ENCODE measurements at regions of chr11 and their contacts with region 1.

Region 1: DNA sequence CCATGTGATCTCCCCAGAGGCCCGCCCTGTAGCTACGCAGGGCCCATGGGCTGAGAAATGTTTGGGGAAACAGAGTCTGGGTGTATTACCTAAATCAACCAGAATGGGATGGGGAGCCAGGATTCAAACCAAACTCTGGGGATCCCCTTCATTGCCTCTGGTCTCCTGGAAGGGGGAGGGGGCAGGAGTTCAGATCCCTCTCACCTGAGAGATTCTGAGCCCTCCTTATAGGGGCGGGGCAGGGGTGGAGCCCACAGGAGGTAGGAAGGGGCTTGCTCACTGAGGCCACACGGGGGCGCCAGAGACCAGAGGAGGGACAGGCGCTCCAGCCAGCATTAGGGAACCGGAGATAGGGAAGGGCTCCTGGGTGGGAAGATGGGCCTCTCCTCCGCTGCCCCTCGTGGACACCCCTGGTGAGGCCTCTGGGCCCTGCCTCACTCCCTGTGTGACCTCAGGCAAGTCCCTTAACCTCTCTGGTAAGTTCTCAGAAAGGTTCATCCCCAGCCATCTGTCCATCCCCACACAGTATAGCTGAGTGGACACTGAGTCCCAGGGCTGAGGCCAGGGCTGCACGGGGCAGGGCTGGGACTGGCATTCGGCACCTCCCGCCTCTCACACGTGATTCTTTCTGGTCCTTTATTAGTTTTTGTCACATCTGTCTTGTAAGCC is 2.7 kb upstream of the CDC42BPG start:
- DNase-seq: peak; percentile 87 to 98
- H3K4me3 ChIP-seq: no peak overlapping the region
- H3K27ac ChIP-seq: no peak overlapping the region
- H3K4me1 ChIP-seq: peaks cover 0 to 38% (median 21%) of the 10 kb centered on the region in 4 experiments; a peak in 6 of 7 replicates
- H3K27me3 ChIP-seq: no peaks in the 10 kb centered on the region
- CTCF ChIP-seq: peak in 2 of 3 experiments; percentile 91 to 97; a peak in 3 of 4 replicates
- EP300 ChIP-seq: no peak
- POLR2A ChIP-seq: no peak
- RAD21 ChIP-seq: peak; percentile 91 to 97

Region 2: GRCh38 chr11:64742889-64743590 is 104.1 kb before region 1 on chr11:
- CTCF ChIA-PET with region 1: no interaction called
- POLR2A ChIA-PET with region 1: no interaction called
- DNase-seq: peak in 1 of 2 experiments; percentile 94
- H3K4me3 ChIP-seq: peak overlapping the region; percentile 46 to 67 (median 57)
- H3K27ac ChIP-seq: no peak overlapping the region
- H3K4me1 ChIP-seq: peaks cover 4 to 33% (median 29%) of the 10 kb centered on the region in 4 experiments
- H3K27me3 ChIP-seq: peaks cover 0 to 32% (median 19%) of the 10 kb centered on the region in 4 experiments; a peak in 5 of 7 replicates
- CTCF ChIP-seq: peak in 2 of 3 experiments; percentile 74; a peak in 3 of 4 replicates
- EP300 ChIP-seq: no peak
- POLR2A ChIP-seq: 0 out of 3 replicates have a peak, but pooled peaks of 1 of the 2 experiments have one; percentile 14
- RAD21 ChIP-seq: peak; percentile 56 to 74

Region 3: GRCh38 chr11:64803163-64803845 is 43.8 kb before region 1 on chr11 and contains the start of gene MAP4K2:
- CTCF ChIA-PET with region 1: interaction called, 24 read pairs
- POLR2A ChIA-PET with region 1: interaction called, 4 read pairs
- DNase-seq: peak in 1 of 2 experiments; percentile 89
- H3K4me3 ChIP-seq: peak within 1 kb of the TSS; percentile 53 to 77 (median 66)
- H3K27ac ChIP-seq: peak within 1 kb of the TSS; percentile 57; the same call in 1 of the 2 replicates
- H3K4me1 ChIP-seq: peaks cover 0 to 14% (median 5%) of the 10 kb centered on the region in 4 experiments; a peak in 5 of 7 replicates
- H3K27me3 ChIP-seq: no peaks in the 10 kb centered on the region
- CTCF ChIP-seq: peak in 2 of 3 experiments; percentile 8 to 20; a peak in 2 of 4 replicates
- EP300 ChIP-seq: no peak
- POLR2A ChIP-seq: no peak
- RAD21 ChIP-seq: no peak
- total RNA-seq, gene MAP4K2: 20.7 and 24.0 TPM in 2 replicates

Region 4: GRCh38 chr11:64864473-64865285 is 17.5 kb after region 1 on chr11:
- CTCF ChIA-PET with region 1: interaction called, 321 read pairs
- POLR2A ChIA-PET with region 1: interaction called, 6 read pairs
- DNase-seq: no peak
- H3K4me3 ChIP-seq: no peak overlapping the region
- H3K27ac ChIP-seq: no peak overlapping the region
- H3K4me1 ChIP-seq: peaks cover 0 to 20% (median 15%) of the 10 kb centered on the region in 4 experiments; a peak in 6 of 7 replicates
- H3K27me3 ChIP-seq: no peaks in the 10 kb centered on the region
- CTCF ChIP-seq: no peak
- EP300 ChIP-seq: no peak
- POLR2A ChIP-seq: no peak
- RAD21 ChIP-seq: no peak

Region 5: GRCh38 chr11:64916775-64917662 is 69.9 kb after region 1 on chr11 and contains the start of gene ATG2A:
- CTCF ChIA-PET with region 1: interaction called, 37 read pairs
- POLR2A ChIA-PET with region 1: no interaction called
- DNase-seq: peak; percentile 97 to 98
- H3K4me3 ChIP-seq: peak within 1 kb of the TSS; percentile 74 to 97 (median 93)
- H3K27ac ChIP-seq: peak within 1 kb of the TSS; percentile 45
- H3K4me1 ChIP-seq: peaks cover 0 to 11% (median 4%) of the 10 kb centered on the region in 4 experiments; a peak in 5 of 7 replicates
- H3K27me3 ChIP-seq: no peaks in the 10 kb centered on the region
- CTCF ChIP-seq: no peak
- EP300 ChIP-seq: no peak
- POLR2A ChIP-seq: 0 out of 3 replicates have a peak, but pooled peaks of 1 of the 2 experiments have one; percentile 36
- RAD21 ChIP-seq: no peak
- total RNA-seq, gene ATG2A: 20.9 and 22.1 TPM in 2 replicates

Region 6: DNA sequence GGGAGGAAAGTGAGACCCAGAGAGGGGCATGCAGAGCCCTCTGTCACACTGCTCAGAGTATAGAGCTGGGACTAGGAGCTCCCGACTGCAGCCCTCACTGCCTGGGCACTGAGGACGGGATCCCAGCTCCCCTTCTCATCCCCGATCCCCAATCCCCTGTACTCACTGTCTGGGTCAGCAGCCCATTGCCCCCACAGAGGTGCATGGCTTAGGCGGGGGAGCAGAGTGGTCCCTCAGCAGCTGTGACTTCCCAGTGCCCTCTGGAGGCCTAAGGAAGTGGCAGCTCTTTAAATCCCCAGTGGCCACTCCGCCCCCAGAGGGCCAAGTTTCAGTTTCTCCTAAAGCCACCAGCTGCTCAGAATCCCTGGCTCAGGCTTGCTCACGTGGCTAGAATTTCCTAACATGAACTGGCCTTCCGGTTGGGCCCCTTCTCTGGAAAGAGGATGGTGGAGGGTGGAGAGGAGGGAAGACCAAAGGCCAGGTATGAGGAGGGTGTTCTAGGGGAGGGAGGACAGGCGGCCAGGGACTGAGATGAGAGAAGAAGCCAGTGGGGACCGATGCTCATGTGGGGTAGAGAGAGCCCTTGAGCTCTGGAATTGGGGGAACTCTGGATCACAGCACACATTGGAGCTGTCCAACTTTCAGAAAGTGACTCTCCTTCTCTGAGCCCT is 149.7 kb after region 1 on chr11 and contains the start of gene BATF2:
- CTCF ChIA-PET with region 1: interaction called, 65 read pairs
- POLR2A ChIA-PET with region 1: interaction called, 4 read pairs
- DNase-seq: peak; percentile 49 to 78
- H3K4me3 ChIP-seq: peak within 1 kb of the TSS in 3 of 4 experiments; percentile 8 to 36 (median 23); a peak in 5 of 8 replicates
- H3K27ac ChIP-seq: peak within 1 kb of the TSS; percentile 50
- H3K4me1 ChIP-seq: peaks cover 0 to 9% (median 1%) of the 10 kb centered on the region in 4 experiments; a peak in 2 of 7 replicates
- H3K27me3 ChIP-seq: no peaks in the 10 kb centered on the region
- CTCF ChIP-seq: peak; percentile 72 to 97 (median 82)
- EP300 ChIP-seq: no peak
- POLR2A ChIP-seq: 0 out of 3 replicates have a peak, but pooled peaks of 1 of the 2 experiments have one; percentile 47
- RAD21 ChIP-seq: peak; percentile 69 to 77
- total RNA-seq, gene BATF2: 1.4 and 2.0 TPM in 2 replicates

Measured in H1 (cell line).